ENCODE measurements at regions of chr1 and their contacts with region 1.

Region 1: GRCh38 chr1:29033829-29034466 is 89.8 kb downstream of the TMEM200B start:
- DNase-seq: no peak
- ATAC-seq: peak; percentile 45 to 51
- H3K4me3 ChIP-seq: no peak overlapping the region
- H3K27ac ChIP-seq: no peak overlapping the region
- H3K4me1 ChIP-seq: no peaks in the 10 kb centered on the region
- H3K27me3 ChIP-seq: no peaks in the 10 kb centered on the region
- CTCF ChIP-seq: peak; percentile 64 to 87 (median 76)
- POLR2A ChIP-seq: no peak

Region 2: GRCh38 chr1:28716336-28716735 is 317.6 kb before region 1 on chr1:
- in situ Hi-C with region 1: no loop called
- intact Hi-C with region 1: no loop called
- DNase-seq: no peak
- ATAC-seq: no peak
- H3K4me3 ChIP-seq: no peak overlapping the region
- H3K27ac ChIP-seq: no peak overlapping the region
- H3K4me1 ChIP-seq: peaks cover 0 to 3% of the 10 kb centered on the region in 2 donors
- H3K27me3 ChIP-seq: no peaks in the 10 kb centered on the region
- CTCF ChIP-seq: no peak
- POLR2A ChIP-seq: no peak

Region 3: GRCh38 chr1:28775121-28775944 is 258.6 kb before region 1 on chr1:
- in situ Hi-C with region 1: loop called in 3 of 4 experiments (anchors 10 kb)
- intact Hi-C with region 1: no loop called
- DNase-seq: peak; percentile 23 to 51
- ATAC-seq: peak in 1 of 2 donors; percentile 71
- H3K4me3 ChIP-seq: peak overlapping the region in 3 of 4 donors; percentile 32 to 44 (median 40)
- H3K27ac ChIP-seq: no peak overlapping the region
- H3K4me1 ChIP-seq: no peaks in the 10 kb centered on the region
- H3K27me3 ChIP-seq: no peaks in the 10 kb centered on the region
- CTCF ChIP-seq: no peak
- POLR2A ChIP-seq: no peak

Region 4: GRCh38 chr1:28983509-28984310 is 50.2 kb before region 1 on chr1:
- in situ Hi-C with region 1: no loop called
- intact Hi-C with region 1: loop called (anchors 5 kb)
- DNase-seq: peak; percentile 38 to 62
- ATAC-seq: peak; percentile 84 to 85
- H3K4me3 ChIP-seq: no peak overlapping the region
- H3K27ac ChIP-seq: peak overlapping the region; percentile 45 to 74 (median 63)
- H3K4me1 ChIP-seq: peaks cover 25 to 32% of the 10 kb centered on the region in 2 donors
- H3K27me3 ChIP-seq: no peaks in the 10 kb centered on the region
- CTCF ChIP-seq: peak in 2 of 5 experiments; percentile 19 to 28
- POLR2A ChIP-seq: no peak